ENCODE measurements at regions of chr2 and their contacts with region 1.

Region 1: GRCh38 chr2:219418155-219418569 is at the start of gene DES:
- DNase-seq: no peak
- ATAC-seq: no peak
- H3K4me3 Mint-ChIP-seq: peak within 1 kb of the TSS; percentile 37
- H3K27ac Mint-ChIP-seq: no peak within 1 kb of the TSS
- H3K4me1 Mint-ChIP-seq: peaks cover 28% of the 10 kb centered on the region
- H3K27me3 Mint-ChIP-seq: peaks cover 38% of the 10 kb centered on the region
- CTCF ChIP-seq: no peak
- total RNA-seq, gene DES: 1.6 to 3.5 TPM (median 2.8 TPM) in 3 replicates

Region 2: DNA sequence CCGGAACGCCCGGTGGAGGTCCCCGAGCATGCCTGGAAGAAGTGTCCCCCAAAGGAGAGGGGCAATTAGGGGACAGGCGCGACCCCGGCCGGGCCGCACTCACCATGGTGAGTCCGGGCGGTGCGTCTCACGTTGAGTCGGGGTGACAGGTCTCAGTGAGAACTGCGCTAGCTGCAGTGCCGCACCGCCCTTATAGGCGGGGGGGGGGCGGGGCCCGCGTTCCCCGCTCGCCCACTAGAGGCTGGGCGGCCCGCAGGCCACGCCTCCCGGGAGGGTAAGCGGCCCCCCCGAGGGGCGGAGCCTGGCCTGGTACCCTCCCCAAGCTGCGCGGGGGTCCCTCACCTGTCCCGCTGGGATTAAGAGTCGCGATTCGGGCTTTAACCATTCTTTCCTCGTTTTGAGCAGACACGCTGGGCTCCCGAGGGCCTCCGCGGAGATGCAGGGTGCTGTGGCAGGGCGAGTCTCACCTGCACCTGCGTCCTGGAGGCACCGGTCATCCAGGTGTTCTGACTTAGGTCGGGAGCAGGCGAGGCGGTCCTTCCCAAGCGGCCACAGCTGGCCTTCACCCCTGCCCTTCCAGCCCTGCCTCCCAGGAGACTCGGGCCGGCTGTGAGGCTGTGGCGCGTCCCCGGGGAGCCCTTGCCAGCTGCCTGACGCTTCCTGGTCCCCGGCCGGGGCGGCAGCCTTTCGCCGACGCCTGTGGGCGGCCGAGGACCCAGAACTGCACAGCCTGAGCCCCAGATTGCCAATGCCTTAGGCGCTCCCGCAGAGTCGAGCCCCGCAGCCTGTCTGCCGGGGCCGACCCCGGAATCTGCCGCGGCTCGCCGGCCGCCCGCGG is 164.2 kb before region 1 on chr2 and contains the start of gene TUBA4A:
- CTCF ChIA-PET with region 1: no interaction called
- POLR2A ChIA-PET with region 1: no interaction called
- DNase-seq: peak; percentile 85
- ATAC-seq: peak; percentile 81
- H3K4me3 Mint-ChIP-seq: peak within 1 kb of the TSS; percentile 79
- H3K27ac Mint-ChIP-seq: peak within 1 kb of the TSS; percentile 41; the same call in 1 of the 2 replicates
- H3K4me1 Mint-ChIP-seq: peaks cover 25% of the 10 kb centered on the region
- H3K27me3 Mint-ChIP-seq: peaks cover 69% of the 10 kb centered on the region
- CTCF ChIP-seq: no peak
- total RNA-seq, gene TUBA4A: 40.8 to 58.7 TPM (median 52.3 TPM) in 3 replicates

Region 3: DNA sequence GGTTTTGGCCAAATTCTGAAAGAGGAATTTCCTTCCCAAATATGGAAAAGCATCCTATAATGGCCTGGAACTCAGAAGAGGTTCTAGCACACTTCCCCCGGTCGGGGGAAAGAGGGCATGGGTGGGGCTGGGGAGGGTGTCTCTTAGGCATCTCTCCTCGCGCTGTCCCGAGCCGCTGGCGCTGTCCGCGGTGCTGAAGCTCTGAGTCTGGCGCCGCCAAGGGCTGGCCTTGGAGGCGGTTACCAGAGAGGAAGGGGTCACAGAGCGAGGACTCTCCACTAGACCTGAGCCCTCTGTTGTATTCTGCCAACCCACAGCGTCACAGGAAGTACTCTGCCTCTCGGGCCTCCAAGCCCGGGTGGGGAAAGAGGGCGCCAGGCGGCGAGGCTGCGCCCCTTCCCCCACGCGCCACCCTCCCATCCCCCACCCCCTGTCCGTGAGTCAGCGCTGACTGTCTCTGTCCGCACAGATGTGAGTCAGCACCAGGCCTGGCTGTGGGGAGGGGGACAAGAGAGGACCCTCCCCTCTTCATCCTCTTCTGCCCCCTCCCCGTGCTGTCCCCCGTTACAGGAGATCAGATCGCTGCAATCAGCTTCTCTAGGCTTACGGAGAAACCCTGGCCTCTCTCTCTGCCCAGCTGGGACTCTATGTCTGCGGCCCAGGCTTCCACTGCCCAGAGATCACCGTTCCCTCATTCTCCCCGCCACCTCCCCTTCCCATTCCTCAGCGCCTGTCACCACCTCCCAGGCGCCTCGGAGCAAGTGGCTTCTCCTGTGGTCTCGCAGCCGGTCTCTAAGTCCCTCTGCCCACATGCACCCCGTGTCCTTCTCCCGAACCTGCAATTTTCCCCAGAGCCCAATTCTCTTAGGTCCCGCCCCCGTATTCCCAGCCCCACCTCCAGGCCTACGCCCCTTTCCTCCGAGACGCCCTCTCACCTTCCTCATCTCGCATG is 109.7 kb before region 1 on chr2:
- CTCF ChIA-PET with region 1: no interaction called
- POLR2A ChIA-PET with region 1: no interaction called
- DNase-seq: peak; percentile 94
- ATAC-seq: peak; percentile 75
- H3K4me3 Mint-ChIP-seq: peak overlapping the region; percentile 85
- H3K27ac Mint-ChIP-seq: no peak overlapping the region
- H3K4me1 Mint-ChIP-seq: peaks cover 22% of the 10 kb centered on the region
- H3K27me3 Mint-ChIP-seq: peaks cover 63% of the 10 kb centered on the region
- CTCF ChIP-seq: no peak

Region 4: GRCh38 chr2:219441451-219442255 is 23.5 kb after region 1 on chr2:
- CTCF ChIA-PET with region 1: interaction called, 21 read pairs
- POLR2A ChIA-PET with region 1: no interaction called
- DNase-seq: peak; percentile 62
- ATAC-seq: peak; percentile 60
- H3K4me3 Mint-ChIP-seq: peak overlapping the region; percentile 82
- H3K27ac Mint-ChIP-seq: no peak overlapping the region
- H3K4me1 Mint-ChIP-seq: peaks cover 27% of the 10 kb centered on the region
- H3K27me3 Mint-ChIP-seq: peaks cover 22% of the 10 kb centered on the region
- CTCF ChIP-seq: no peak

Region 5: DNA sequence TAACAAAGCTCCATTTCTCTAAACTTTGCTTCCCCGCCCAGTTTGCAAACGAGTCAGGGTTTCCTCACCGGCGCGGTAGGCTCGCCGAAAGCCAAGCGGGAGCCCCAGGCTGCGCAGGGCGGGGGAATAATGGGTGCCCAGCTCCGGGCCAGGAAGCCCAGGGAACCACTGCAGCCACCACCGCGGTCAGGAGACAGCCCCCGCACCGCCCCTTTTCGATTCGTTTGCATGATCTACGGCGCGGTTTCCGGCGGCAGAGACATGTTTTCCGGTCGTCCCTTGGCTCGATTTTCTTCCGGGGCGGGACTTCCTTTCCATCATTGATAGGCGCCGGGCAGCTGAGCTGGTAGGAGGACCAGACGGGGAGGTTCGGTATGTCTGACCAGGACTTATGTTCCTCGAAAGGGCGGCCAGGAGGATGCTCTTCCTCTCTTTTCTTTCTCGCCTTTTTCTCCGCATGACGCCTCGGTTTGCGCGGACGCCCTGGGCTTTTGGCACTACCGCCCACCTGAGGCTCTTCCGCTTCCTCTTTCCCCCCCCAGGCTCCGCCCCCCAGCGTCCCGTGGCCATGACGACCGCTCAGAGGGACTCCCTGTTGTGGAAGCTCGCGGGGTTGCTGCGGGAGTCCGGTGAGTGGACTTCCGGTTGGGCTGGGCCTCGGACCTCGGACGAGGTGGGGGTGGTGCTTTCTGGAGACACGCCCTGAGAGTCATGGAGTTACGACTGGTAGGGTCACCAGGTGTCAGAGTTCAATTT is 179.6 kb after region 1 on chr2 and contains the start of gene STK11IP:
- CTCF ChIA-PET with region 1: no interaction called
- POLR2A ChIA-PET with region 1: no interaction called
- DNase-seq: peak; percentile 94
- ATAC-seq: peak; percentile 89
- H3K4me3 Mint-ChIP-seq: peak within 1 kb of the TSS; percentile 97
- H3K27ac Mint-ChIP-seq: peak within 1 kb of the TSS; percentile 99
- H3K4me1 Mint-ChIP-seq: peaks cover 33% of the 10 kb centered on the region
- H3K27me3 Mint-ChIP-seq: no peaks in the 10 kb centered on the region
- CTCF ChIP-seq: no peak
- total RNA-seq, gene STK11IP: 31.3 to 39.9 TPM (median 31.9 TPM) in 3 replicates